Activated T-helper 1 cell treated with anti-CD3 and anti-CD28 coated beads, Interleukin-12 subunit alpha, Interleukin-12 subunit beta, Interleukin-2, Interleukin-4 antibody, amounts not matched to agents 30 ng/mL and 10 ng/mL and 1 ng/mL, durations not matched to agents 14 hours and 24 hours and 36 hours (primary cell): ENCODE measurements at regions of chr3 and their contacts with region 1.

Region 1: DNA sequence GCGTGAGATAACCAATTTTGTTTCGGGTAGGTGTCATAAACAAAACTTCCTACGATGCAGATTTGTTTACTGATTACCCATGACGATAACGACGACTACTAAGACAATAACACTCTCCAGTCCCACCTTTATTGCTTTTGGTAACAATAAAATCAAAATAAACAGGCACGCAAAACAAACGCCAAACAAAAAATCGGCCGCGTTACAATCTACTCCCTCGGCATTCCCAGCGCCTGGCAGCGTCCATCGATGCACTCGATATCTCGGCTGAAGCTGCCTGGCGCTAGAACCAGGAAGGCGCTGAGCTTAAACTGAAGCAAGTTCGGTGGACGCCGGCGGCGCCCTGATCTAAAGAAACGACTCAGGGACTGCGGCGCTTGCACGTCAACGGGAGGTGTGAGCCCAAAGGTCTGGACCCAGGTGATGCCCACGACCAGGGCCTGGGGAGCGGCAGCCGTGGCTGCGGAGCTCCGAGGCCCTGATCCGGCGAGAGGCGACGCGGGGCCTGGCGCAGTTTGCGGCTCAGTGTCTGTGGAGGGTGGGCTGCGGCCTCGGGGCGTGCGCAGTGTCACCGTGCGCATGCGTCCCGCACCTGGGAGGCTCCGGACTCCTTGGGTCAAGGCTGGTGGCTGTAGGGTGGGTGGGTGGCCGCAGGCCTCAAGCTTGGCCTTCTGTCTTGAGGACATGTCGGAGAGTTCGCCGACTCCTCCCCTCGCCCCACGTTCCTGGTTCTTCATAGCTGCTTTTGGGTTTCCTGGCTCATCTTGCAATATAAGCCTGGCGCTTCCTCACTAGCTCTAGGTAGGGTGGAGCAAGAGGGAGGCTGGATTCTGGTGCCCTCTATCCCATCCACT is at the start of gene RSRC1:
- DNase-seq: peak; percentile 71
- H3K4me3 Mint-ChIP-seq: peak within 1 kb of the TSS; percentile 87
- H3K27ac Mint-ChIP-seq: peak within 1 kb of the TSS; percentile 65
- H3K4me1 Mint-ChIP-seq: peaks cover 62% of the 10 kb centered on the region
- H3K27me3 Mint-ChIP-seq: peaks cover 39% of the 10 kb centered on the region
- total RNA-seq, gene RSRC1: 41.1 and 41.8 TPM in 2 replicates

Region 2: GRCh38 chr3:157618075-157618760 is 491.8 kb before region 1 on chr3:
- intact Hi-C with region 1: loop called (anchors 5 kb)
- DNase-seq: no peak
- H3K4me3 Mint-ChIP-seq: no peak overlapping the region
- H3K27ac Mint-ChIP-seq: no peak overlapping the region
- H3K4me1 Mint-ChIP-seq: peaks cover 8% of the 10 kb centered on the region
- H3K27me3 Mint-ChIP-seq: peaks cover 15% of the 10 kb centered on the region

Region 3: GRCh38 chr3:158127250-158128219 is 17.5 kb after region 1 on chr3:
- intact Hi-C with region 1: loop called (anchors 2 kb)
- DNase-seq: no peak
- H3K4me3 Mint-ChIP-seq: no peak overlapping the region
- H3K27ac Mint-ChIP-seq: no peak overlapping the region
- H3K4me1 Mint-ChIP-seq: peaks cover 14% of the 10 kb centered on the region
- H3K27me3 Mint-ChIP-seq: no peaks in the 10 kb centered on the region

Region 4: DNA sequence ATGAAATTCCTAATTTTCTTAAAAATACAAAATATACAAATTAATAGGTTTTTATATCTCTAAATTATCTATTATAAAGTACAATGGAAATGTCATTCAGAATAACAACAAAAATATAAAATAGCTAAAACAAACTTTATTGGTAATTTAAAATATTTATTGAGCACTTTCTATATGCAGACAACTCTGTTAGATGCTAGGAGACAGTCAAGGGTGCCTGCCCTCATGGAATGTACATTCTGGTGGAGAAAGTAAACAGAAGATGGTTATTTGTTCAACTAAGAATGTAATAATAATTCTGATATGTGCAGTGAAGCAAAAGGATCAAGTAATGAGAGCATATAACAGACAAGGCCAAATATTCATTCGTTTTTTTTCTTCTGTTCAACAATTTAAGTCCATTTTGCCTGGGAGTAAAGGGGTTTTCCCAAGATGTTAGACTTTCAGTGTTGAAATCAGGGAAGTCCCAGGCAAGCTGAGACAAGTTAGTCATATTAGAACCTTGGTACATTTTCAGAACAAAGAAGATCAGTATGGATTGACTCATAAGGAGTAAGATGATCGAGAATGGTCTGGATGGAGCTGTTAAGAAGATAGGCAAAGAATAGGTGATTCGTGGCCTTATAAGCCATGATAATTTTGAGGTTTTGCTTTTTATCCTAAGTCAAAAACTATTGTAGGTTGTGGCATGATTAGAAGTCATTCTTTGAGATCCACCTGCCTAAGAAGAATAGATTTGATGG is 310.8 kb after region 1 on chr3:
- intact Hi-C with region 1: loop called (anchors 1 kb)
- DNase-seq: no peak
- H3K4me3 Mint-ChIP-seq: no peak overlapping the region
- H3K27ac Mint-ChIP-seq: peak overlapping the region; percentile 8
- H3K4me1 Mint-ChIP-seq: peaks cover 14% of the 10 kb centered on the region
- H3K27me3 Mint-ChIP-seq: no peaks in the 10 kb centered on the region

Region 5: GRCh38 chr3:158570999-158571974 is 461.3 kb after region 1 on chr3 and contains the start of gene MLF1:
- intact Hi-C with region 1: loop called (anchors 5 kb)
- DNase-seq: peak; percentile 80
- H3K4me3 Mint-ChIP-seq: peak within 1 kb of the TSS; percentile 85
- H3K27ac Mint-ChIP-seq: peak within 1 kb of the TSS; percentile 83
- H3K4me1 Mint-ChIP-seq: peaks cover 13% of the 10 kb centered on the region
- H3K27me3 Mint-ChIP-seq: peaks cover 33% of the 10 kb centered on the region
- total RNA-seq, gene MLF1: 0.78 and 0.83 TPM in 2 replicates

Region 6: DNA sequence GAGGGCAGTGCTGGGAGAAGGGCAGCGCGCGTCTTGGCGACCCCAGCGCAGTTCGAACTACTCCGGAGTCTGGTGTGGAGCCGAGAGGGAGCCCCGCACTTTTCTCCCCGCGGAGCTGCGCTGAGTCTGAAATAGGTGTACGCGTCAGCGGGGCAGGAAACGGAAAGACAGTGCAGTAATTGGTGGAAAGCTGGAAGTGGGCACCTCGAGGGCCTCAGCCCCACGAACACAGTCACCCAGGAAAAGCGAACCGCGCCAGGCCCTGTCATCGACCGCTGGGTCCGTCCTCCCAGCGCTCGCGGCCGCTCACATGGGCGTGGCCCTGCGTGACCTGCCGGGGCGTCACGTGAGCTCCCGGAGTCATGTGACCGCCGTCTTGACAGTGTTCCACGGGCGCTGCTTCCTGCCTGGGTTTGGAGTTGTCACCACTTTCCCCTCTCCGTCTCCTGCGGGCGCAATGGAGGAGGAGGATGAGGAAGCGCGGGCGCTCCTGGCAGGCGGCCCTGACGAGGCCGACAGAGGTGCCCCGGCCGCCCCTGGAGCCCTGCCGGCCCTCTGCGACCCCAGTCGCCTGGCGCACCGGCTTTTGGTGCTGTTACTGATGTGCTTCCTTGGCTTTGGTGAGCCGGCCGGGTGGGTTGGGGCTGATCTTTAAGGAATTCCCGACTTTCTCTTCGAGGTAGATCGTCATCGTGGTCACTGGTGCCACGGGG is 691.8 kb after region 1 on chr3 and contains the start of gene MFSD1:
- intact Hi-C with region 1: loop called (anchors 10 kb)
- DNase-seq: peak; percentile 87
- H3K4me3 Mint-ChIP-seq: peak within 1 kb of the TSS; percentile 89
- H3K27ac Mint-ChIP-seq: peak within 1 kb of the TSS; percentile 65
- H3K4me1 Mint-ChIP-seq: peaks cover 17% of the 10 kb centered on the region
- H3K27me3 Mint-ChIP-seq: peaks cover 14% of the 10 kb centered on the region
- total RNA-seq, gene MFSD1: 21.2 and 26.0 TPM in 2 replicates